ENCODE measurements at regions of chr11 and their contacts with region 1.

Region 1: GRCh38 chr11:47176328-47177228 is at the start of gene ARFGAP2:
- DNase-seq: peak; percentile 96 to 97 (median 97)
- H3K4me3 ChIP-seq: peak within 1 kb of the TSS; percentile 89 to 91
- H3K4me3 Mint-ChIP-seq: peak within 1 kb of the TSS; percentile 97 to 100 (median 98)
- H3K27ac ChIP-seq: peak within 1 kb of the TSS; percentile 92
- H3K27ac Mint-ChIP-seq: peak within 1 kb of the TSS; percentile 99 to 100 (median 99)
- H3K4me1 ChIP-seq: peaks cover 42% of the 10 kb centered on the region
- H3K4me1 Mint-ChIP-seq: peaks cover 16 to 65% (median 36%) of the 10 kb centered on the region in 4 donors
- H3K27me3 ChIP-seq: no peaks in the 10 kb centered on the region
- H3K27me3 Mint-ChIP-seq: peaks cover 0 to 5% of the 10 kb centered on the region in 2 donors
- total RNA-seq, gene ARFGAP2: 141 to 142 TPM

Region 2: DNA sequence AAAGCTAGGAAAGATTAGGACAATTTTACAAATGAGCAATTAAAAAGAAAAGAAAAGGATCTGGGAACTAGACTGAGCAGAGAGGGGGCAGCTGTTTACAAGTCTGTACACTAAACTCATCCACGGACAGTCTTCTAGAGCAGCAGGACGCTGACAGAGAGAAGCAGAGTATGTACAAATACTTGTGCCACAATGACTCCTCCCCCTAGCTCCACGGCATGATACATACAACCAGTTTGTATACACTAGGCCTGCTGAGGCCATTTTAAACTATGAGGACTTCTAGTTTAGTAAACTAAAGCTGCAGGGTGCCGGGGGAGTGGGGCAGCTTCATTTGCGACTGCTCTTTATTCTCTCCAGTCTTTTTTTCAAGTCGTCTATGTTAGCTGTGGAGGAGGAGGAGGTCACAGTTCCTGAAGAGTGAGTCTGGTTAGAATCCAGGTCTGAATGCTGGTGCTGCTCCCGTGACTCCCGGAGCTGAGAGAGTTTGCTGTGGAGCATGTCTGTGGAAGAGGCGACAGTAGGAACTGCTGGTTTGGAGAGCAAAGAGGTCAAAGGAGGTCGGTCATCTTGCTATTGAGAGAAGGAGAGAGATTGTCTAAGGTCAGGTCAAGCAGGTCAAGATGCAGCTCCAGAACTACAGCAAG is 432.8 kb before region 1 on chr11:
- CTCF ChIA-PET with region 1: no interaction called
- POLR2A ChIA-PET with region 1: no interaction called
- intact Hi-C with region 1: no loop called
- DNase-seq: no peak
- H3K4me3 ChIP-seq: no peak overlapping the region
- H3K4me3 Mint-ChIP-seq: no peak overlapping the region
- H3K27ac ChIP-seq: no peak overlapping the region
- H3K27ac Mint-ChIP-seq: peak overlapping the region in 3 of 7 donors; percentile 1 to 52 (median 13)
- H3K4me1 ChIP-seq: no peaks in the 10 kb centered on the region
- H3K4me1 Mint-ChIP-seq: no peaks in the 10 kb centered on the region
- H3K27me3 ChIP-seq: no peaks in the 10 kb centered on the region
- H3K27me3 Mint-ChIP-seq: no peaks in the 10 kb centered on the region

Region 3: GRCh38 chr11:47060807-47061206 is 115.8 kb before region 1 on chr11:
- CTCF ChIA-PET with region 1: no interaction called
- POLR2A ChIA-PET with region 1: no interaction called
- intact Hi-C with region 1: no loop called
- DNase-seq: no peak
- H3K4me3 ChIP-seq: no peak overlapping the region
- H3K4me3 Mint-ChIP-seq: no peak overlapping the region
- H3K27ac ChIP-seq: no peak overlapping the region
- H3K27ac Mint-ChIP-seq: peak overlapping the region in 1 of 7 donors; percentile 57
- H3K4me1 ChIP-seq: no peaks in the 10 kb centered on the region
- H3K4me1 Mint-ChIP-seq: peaks cover 0 to 5% (median under 1%) of the 10 kb centered on the region in 4 donors
- H3K27me3 ChIP-seq: no peaks in the 10 kb centered on the region
- H3K27me3 Mint-ChIP-seq: no peaks in the 10 kb centered on the region

Region 4: GRCh38 chr11:47143322-47143721 is 33.3 kb before region 1 on chr11:
- CTCF ChIA-PET with region 1: no interaction called
- POLR2A ChIA-PET with region 1: no interaction called
- intact Hi-C with region 1: no loop called
- DNase-seq: no peak
- H3K4me3 ChIP-seq: no peak overlapping the region
- H3K4me3 Mint-ChIP-seq: no peak overlapping the region
- H3K27ac ChIP-seq: no peak overlapping the region
- H3K27ac Mint-ChIP-seq: no peak overlapping the region
- H3K4me1 ChIP-seq: no peaks in the 10 kb centered on the region
- H3K4me1 Mint-ChIP-seq: no peaks in the 10 kb centered on the region
- H3K27me3 ChIP-seq: no peaks in the 10 kb centered on the region
- H3K27me3 Mint-ChIP-seq: no peaks in the 10 kb centered on the region

Region 5: DNA sequence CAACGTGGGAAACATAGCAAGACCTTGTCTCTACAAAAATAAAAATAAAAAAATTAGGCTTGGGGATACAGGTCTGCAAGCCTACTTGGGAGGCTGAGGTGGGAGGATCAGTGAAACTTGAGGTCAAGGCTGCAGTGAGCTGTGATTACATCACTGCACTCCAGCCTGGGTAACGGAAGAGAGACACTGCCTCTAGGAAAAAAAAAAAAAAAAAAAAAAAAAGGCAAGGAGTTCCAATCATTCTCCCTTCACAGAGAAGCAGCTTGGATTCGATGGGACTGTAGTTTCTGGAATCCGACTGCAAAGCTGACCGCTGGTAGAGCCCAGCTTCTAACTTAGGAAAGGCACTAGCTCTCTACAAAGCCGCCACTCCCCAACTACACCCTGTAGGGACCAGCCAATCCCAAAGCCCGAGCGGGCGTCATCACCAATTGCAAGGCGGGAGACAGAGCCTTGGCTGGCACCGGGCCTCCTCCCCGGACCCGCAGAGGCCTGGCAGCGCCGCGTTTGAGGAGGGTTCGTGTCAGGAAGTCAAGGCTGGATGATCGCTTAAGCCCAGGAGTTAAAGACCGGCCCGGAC is 37.5 kb after region 1 on chr11:
- CTCF ChIA-PET with region 1: interaction called, 42 read pairs
- POLR2A ChIA-PET with region 1: interaction called, 66 read pairs
- intact Hi-C with region 1: loop called (anchors 1 kb)
- DNase-seq: peak; percentile 79 to 88 (median 80)
- H3K4me3 ChIP-seq: peak overlapping the region; percentile 57 to 95
- H3K4me3 Mint-ChIP-seq: peak overlapping the region; percentile 99 to 100 (median 99)
- H3K27ac ChIP-seq: peak overlapping the region; percentile 81
- H3K27ac Mint-ChIP-seq: peak overlapping the region; percentile 98 to 100 (median 99)
- H3K4me1 ChIP-seq: peaks cover 37% of the 10 kb centered on the region
- H3K4me1 Mint-ChIP-seq: peaks cover 23 to 39% (median 28%) of the 10 kb centered on the region in 4 donors
- H3K27me3 ChIP-seq: no peaks in the 10 kb centered on the region
- H3K27me3 Mint-ChIP-seq: no peaks in the 10 kb centered on the region

Region 6: DNA sequence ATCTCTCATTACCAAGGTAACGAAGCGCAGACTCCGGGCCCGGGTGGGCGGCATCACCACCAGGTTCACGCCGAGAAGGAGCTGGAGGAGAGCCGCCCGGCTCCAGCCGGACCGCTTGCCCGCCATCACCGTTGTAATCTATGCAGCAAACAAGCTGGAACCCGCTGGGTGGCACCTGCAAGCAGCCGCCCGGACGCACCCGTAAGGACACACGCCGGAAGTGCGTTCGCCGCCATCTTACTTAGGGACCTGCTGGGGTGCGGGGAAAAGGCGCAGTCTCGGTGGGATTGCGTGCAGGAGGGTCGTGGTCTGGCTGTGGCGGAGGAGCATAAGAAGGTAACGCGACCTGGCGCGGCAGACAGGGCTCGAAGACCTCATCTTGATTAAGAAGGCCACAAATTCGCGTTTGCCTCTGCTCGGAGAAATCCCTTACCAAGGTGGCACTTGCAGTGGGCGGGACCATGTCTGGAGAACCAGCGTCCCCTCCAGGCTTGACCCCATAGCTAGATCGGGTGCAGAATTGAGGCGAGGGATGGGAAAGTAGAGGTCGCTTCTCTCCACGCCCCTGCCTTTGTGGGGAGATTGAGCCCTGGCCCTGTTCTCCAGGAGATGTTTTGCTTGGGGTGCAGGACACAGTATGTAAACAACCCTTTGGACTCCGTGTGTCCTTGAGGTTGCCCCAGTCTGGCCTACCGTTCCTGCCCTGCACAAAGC is 72.2 kb after region 1 on chr11 and contains the start of gene ACP2:
- CTCF ChIA-PET with region 1: interaction called, 7 read pairs
- POLR2A ChIA-PET with region 1: interaction called, 26 read pairs
- intact Hi-C with region 1: loop called (anchors 1 kb)
- DNase-seq: peak; percentile 87 to 90 (median 87)
- H3K4me3 ChIP-seq: peak within 1 kb of the TSS; percentile 89 to 94
- H3K4me3 Mint-ChIP-seq: peak within 1 kb of the TSS; percentile 99 to 100 (median 99)
- H3K27ac ChIP-seq: peak within 1 kb of the TSS; percentile 75
- H3K27ac Mint-ChIP-seq: peak within 1 kb of the TSS; percentile 91 to 99 (median 99)
- H3K4me1 ChIP-seq: peaks cover 20% of the 10 kb centered on the region
- H3K4me1 Mint-ChIP-seq: peaks cover 12 to 29% (median 20%) of the 10 kb centered on the region in 4 donors
- H3K27me3 ChIP-seq: no peaks in the 10 kb centered on the region
- H3K27me3 Mint-ChIP-seq: no peaks in the 10 kb centered on the region
- total RNA-seq, gene ACP2: 23.6 to 23.7 TPM

Region 7: GRCh38 chr11:47269002-47269828 is 92.6 kb after region 1 on chr11:
- CTCF ChIA-PET with region 1: interaction called, 9 read pairs
- POLR2A ChIA-PET with region 1: interaction called, 19 read pairs
- intact Hi-C with region 1: loop called (anchors 1 kb)
- DNase-seq: peak; percentile 84 to 90 (median 87)
- H3K4me3 ChIP-seq: peak overlapping the region; percentile 59 to 90
- H3K4me3 Mint-ChIP-seq: peak overlapping the region; percentile 87 to 95 (median 92)
- H3K27ac ChIP-seq: peak overlapping the region; percentile 79
- H3K27ac Mint-ChIP-seq: peak overlapping the region; percentile 94 to 100 (median 96)
- H3K4me1 ChIP-seq: peaks cover 53% of the 10 kb centered on the region
- H3K4me1 Mint-ChIP-seq: peaks cover 41 to 60% (median 52%) of the 10 kb centered on the region in 4 donors
- H3K27me3 ChIP-seq: no peaks in the 10 kb centered on the region
- H3K27me3 Mint-ChIP-seq: no peaks in the 10 kb centered on the region

Region 8: GRCh38 chr11:47407746-47408590 is 231.4 kb after region 1 on chr11 and contains the start of gene SLC39A13:
- CTCF ChIA-PET with region 1: interaction called, 6 read pairs
- POLR2A ChIA-PET with region 1: no interaction called
- intact Hi-C with region 1: loop called (anchors 5 kb)
- DNase-seq: peak; percentile 88 to 94 (median 90)
- H3K4me3 ChIP-seq: peak within 1 kb of the TSS; percentile 34 to 73
- H3K4me3 Mint-ChIP-seq: peak within 1 kb of the TSS; percentile 89 to 97 (median 92)
- H3K27ac ChIP-seq: peak within 1 kb of the TSS; percentile 80
- H3K27ac Mint-ChIP-seq: peak within 1 kb of the TSS; percentile 92 to 97 (median 94)
- H3K4me1 ChIP-seq: peaks cover 25% of the 10 kb centered on the region
- H3K4me1 Mint-ChIP-seq: peaks cover 10 to 27% (median 20%) of the 10 kb centered on the region in 4 donors
- H3K27me3 ChIP-seq: no peaks in the 10 kb centered on the region
- H3K27me3 Mint-ChIP-seq: no peaks in the 10 kb centered on the region
- total RNA-seq, gene SLC39A13: 63.6 to 68.3 TPM

Region 9: DNA sequence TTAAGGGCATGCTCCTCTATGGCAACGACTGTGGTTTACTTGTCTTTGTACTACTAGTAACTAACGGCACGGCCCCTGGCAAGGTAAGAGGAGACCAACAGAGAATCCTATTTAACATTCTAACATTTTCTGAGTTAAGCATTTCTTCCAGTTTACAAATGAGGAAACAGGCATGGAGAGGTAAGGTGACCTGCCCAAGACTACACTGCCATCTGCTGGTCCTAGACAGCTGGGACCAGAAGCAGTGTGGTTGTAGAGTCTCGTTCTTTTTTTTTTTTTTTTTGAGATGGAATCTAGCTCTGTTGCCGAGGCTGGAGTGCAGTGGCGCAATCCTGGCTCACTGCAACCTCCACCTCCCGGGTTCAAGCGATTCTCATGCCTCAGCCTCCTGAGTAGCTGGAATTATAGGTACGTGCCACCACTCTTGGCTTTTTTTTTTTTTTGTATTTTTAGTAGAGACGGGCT is 277.6 kb after region 1 on chr11:
- CTCF ChIA-PET with region 1: interaction called, 4 read pairs
- POLR2A ChIA-PET with region 1: no interaction called
- intact Hi-C with region 1: loop called (anchors 1 kb)
- DNase-seq: peak; percentile 63 to 72 (median 68)
- H3K4me3 ChIP-seq: no peak overlapping the region
- H3K4me3 Mint-ChIP-seq: peak overlapping the region in 2 of 8 donors; percentile 39 to 44
- H3K27ac ChIP-seq: no peak overlapping the region
- H3K27ac Mint-ChIP-seq: peak overlapping the region in 3 of 7 donors; percentile 27 to 36 (median 28)
- H3K4me1 ChIP-seq: peaks cover 10% of the 10 kb centered on the region
- H3K4me1 Mint-ChIP-seq: peaks cover 0 to 9% (median 5%) of the 10 kb centered on the region in 4 donors
- H3K27me3 ChIP-seq: no peaks in the 10 kb centered on the region
- H3K27me3 Mint-ChIP-seq: no peaks in the 10 kb centered on the region

Region 10: DNA sequence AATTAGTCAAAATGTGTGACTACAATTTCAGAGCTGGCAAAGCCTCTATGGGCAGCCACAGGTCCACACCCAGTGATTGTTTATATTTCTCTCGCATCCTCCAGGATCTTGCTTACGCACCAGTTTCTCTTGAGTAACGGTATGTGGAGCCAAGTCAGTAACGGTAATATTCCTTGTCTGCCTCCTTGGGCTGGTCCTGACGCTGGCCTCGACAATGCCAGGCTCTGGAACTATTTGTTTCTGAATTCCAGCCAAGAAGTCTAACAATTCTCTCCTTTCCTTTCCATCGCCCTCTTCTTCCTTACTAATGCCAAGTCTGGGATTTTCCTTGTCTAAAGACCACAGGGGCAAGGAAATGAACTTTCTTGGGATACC is 681.6 kb after region 1 on chr11:
- CTCF ChIA-PET with region 1: no interaction called
- POLR2A ChIA-PET with region 1: no interaction called
- intact Hi-C with region 1: loop called (anchors 10 kb)
- DNase-seq: no peak
- H3K4me3 ChIP-seq: no peak overlapping the region
- H3K4me3 Mint-ChIP-seq: peak overlapping the region in 3 of 8 donors; percentile 9 to 42 (median 31)
- H3K27ac ChIP-seq: no peak overlapping the region
- H3K27ac Mint-ChIP-seq: peak overlapping the region in 4 of 7 donors; percentile 9 to 83 (median 18)
- H3K4me1 ChIP-seq: peaks cover 33% of the 10 kb centered on the region
- H3K4me1 Mint-ChIP-seq: peaks cover 21 to 44% (median 32%) of the 10 kb centered on the region in 4 donors
- H3K27me3 ChIP-seq: no peaks in the 10 kb centered on the region
- H3K27me3 Mint-ChIP-seq: no peaks in the 10 kb centered on the region